Activated naive CD4-positive, alpha-beta T cell treated with anti-CD3 and anti-CD28 coated beads, Interleukin-2, amount 10 ng/mL, durations not matched to agents 7 days and 5 days (primary cell): ENCODE measurements at regions of chr2 and their contacts with region 1.

Region 1: GRCh38 chr2:97740590-97741182 is 27.3 kb downstream of the ZAP70 start:
- DNase-seq: peak; percentile 46
- H3K4me3 Mint-ChIP-seq: peak overlapping the region; percentile 17
- H3K27ac Mint-ChIP-seq: peak overlapping the region; percentile 93
- H3K4me1 Mint-ChIP-seq: peaks cover 57% of the 10 kb centered on the region
- H3K27me3 Mint-ChIP-seq: no peaks in the 10 kb centered on the region

Region 2: DNA sequence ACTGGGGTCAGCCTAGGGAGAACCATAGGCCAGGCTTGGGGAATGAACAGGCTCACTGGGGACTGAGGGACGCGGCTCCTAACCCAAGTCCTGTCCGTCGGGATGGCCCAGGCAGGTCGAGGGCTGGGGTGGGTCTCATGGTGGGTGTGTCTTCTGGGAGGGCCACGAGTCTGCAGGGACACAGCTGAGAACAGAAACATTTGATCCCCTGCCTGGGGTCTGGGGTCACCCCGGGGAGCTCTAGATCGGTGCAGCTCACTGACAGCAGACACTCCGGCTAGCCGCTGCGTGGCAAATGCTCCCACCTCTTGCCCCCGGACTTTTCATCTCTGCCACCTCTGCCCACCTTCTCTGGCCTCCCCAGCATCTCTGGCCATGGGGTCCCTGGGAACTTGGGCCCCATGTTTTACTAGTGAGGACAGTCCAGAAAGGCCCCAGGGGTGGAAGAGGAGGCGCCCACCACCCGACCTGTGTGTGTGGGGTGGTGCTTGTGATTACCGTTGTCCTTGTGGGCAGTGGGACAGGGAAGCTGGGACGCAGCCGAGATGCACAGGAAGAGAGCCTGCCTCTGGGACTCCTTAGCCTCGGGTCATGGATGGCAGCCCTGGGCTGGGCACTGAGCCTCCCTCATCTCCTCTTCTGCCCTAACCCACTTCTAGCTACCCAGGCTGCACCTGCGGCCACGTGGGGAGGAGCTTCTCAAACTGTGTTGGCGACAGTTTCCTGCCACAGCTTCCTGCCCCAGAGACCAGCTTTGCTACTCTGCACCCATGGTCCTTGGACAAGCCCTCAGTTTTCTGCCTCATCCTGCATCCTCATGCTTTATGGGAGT is 22.4 kb before region 1 on chr2:
- CTCF ChIA-PET with region 1: interaction called, 31 read pairs
- DNase-seq: peak; percentile 86
- H3K4me3 Mint-ChIP-seq: peak overlapping the region; percentile 85
- H3K27ac Mint-ChIP-seq: peak overlapping the region; percentile 96
- H3K4me1 Mint-ChIP-seq: peaks cover 78% of the 10 kb centered on the region
- H3K27me3 Mint-ChIP-seq: no peaks in the 10 kb centered on the region

Region 3: DNA sequence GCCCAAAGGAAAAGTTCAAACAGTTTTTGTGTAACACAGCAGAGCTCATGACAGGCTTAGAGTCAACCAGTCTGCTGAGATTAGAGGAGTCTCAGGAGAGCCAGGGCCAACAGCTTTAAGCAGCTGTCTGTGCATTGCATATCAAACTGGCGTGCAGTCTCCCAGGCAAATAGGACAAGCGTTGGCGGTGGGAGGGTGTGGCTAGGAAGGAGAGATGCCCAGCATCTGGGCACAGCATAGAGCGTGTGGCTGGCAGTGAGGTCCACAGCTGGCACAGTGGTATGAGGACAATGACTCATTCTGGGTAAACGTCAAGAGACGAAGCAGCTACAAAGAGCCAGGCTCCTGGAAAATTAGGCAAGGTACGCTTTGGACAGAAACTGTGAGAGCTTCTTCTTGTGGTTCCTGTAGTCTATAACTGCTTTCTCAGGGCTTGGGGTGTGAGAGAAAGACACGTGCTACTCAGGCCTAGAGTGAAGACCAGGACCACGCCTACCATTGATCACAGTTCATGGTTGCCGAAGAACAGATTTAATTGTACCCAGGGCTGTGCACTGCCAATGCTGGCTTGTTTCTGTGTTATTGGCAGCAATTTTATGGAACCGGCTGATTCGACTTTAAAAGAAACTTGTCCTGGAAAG is 12.5 kb before region 1 on chr2:
- CTCF ChIA-PET with region 1: interaction called, 30 read pairs
- DNase-seq: no peak
- H3K4me3 Mint-ChIP-seq: no peak overlapping the region
- H3K27ac Mint-ChIP-seq: peak overlapping the region; percentile 64
- H3K4me1 Mint-ChIP-seq: peaks cover 40% of the 10 kb centered on the region
- H3K27me3 Mint-ChIP-seq: no peaks in the 10 kb centered on the region

Region 4: GRCh38 chr2:97911206-97911921 is 170.7 kb after region 1 on chr2:
- CTCF ChIA-PET with region 1: no interaction called
- DNase-seq: no peak
- H3K4me3 Mint-ChIP-seq: no peak overlapping the region
- H3K27ac Mint-ChIP-seq: no peak overlapping the region
- H3K4me1 Mint-ChIP-seq: peaks cover 3% of the 10 kb centered on the region
- H3K27me3 Mint-ChIP-seq: no peaks in the 10 kb centered on the region